ENCODE measurements at regions of chr1 and their contacts with region 1.

Region 1: DNA sequence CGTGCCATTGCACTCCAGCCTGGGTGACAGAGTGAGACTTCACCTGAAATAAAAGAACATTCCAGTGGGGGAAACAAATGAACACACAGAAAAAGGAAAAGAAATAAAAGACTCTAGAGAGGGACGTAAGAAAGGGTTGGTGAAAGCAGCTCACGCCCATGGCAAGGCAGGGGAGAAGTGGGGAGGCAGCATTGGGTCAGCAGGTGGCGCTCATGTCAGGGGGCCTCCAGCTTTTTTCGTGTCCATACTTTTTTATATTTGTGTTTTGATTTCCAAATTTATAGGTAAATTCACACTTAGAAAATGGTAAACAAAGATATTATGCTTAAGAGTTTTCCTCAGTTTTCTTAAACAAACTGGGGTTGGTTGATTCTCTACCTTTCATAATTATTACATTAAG is 45.5 kb downstream of the VPS13D start:
- DNase-seq: no peak
- H3K4me3 ChIP-seq: no peak overlapping the region
- H3K27ac ChIP-seq: no peak overlapping the region
- H3K27me3 ChIP-seq: no peaks in the 10 kb centered on the region
- CTCF ChIP-seq: peak; percentile 81

Region 2: DNA sequence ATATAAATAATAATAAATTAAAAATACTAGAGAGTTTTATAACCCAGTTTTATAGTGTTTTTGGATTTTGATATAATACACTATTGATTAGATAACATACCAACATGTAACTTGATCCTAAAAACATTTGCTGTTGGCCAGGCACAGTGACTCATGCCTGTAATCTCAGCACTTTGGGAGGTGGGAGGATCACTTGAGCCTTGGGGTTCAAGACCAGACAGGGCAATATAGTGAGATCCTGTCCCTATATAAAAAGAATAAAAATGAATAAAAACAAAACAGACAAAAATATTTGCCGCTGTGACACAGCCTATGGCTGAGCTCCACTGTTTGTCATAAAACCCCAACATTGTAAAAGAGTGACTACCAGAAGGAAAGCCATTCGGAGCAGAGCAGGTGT is 19.5 kb before region 1 on chr1:
- CTCF ChIA-PET with region 1: interaction called, 12 read pairs
- POLR2A ChIA-PET with region 1: interaction called, 3 read pairs
- DNase-seq: no peak
- H3K4me3 ChIP-seq: no peak overlapping the region
- H3K27ac ChIP-seq: no peak overlapping the region
- H3K27me3 ChIP-seq: no peaks in the 10 kb centered on the region
- CTCF ChIP-seq: no peak

Region 3: DNA sequence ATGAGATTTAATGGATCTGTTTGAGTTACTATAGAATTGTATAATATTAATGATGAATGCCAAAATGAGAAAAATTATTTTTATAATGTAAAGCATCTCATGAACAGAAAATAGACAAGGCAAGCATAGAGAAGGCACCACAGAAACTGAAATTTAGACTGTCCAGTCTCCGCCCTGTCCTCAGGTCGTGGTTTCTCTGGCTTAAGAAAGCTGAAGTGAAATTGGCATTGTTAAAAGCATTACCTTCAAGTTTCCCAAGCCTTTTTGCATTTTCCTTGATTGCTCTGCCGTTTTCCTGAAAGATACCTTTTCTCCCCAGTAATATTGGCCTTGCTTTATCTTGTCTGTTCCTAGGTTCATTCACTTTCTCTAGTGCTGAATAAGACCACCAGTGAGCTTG is 12.5 kb after region 1 on chr1:
- CTCF ChIA-PET with region 1: interaction called, 11 read pairs
- POLR2A ChIA-PET with region 1: no interaction called
- DNase-seq: no peak
- H3K4me3 ChIP-seq: no peak overlapping the region
- H3K27ac ChIP-seq: no peak overlapping the region
- H3K27me3 ChIP-seq: no peaks in the 10 kb centered on the region
- CTCF ChIP-seq: no peak

Region 4: DNA sequence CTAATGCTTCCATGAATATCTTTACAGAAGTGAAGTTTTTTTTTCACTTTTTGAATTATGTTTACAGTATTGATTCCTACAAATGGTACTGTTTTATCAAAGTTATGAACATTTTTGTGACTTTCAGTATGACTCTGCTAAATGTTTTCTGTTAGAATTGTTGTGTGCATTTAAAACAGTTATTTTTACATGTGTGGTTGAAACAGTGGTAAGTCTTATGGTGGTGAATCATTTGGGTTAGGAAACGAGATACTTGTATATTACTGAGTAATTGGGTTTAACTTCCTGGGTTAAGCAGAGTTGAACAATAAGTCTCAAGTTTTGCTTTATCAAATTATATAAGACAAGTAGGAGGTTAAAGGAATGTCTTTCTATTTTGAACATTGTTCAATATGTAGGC is 21.3 kb after region 1 on chr1:
- CTCF ChIA-PET with region 1: interaction called, 10 read pairs
- POLR2A ChIA-PET with region 1: no interaction called
- DNase-seq: no peak
- H3K4me3 ChIP-seq: no peak overlapping the region
- H3K27ac ChIP-seq: no peak overlapping the region
- H3K27me3 ChIP-seq: no peaks in the 10 kb centered on the region
- CTCF ChIP-seq: no peak